Activated naive CD4-positive, alpha-beta T cell treated with anti-CD3 and anti-CD28 coated beads for 36 hours (primary cell): ENCODE measurements at regions of chr3 and their contacts with region 1.

Region 1: GRCh38 chr3:177597311-177598096 is 400.2 kb upstream of the TBL1XR1 start:
- DNase-seq: peak; percentile 51
- H3K4me3 Mint-ChIP-seq: peak overlapping the region; percentile 54
- H3K27ac Mint-ChIP-seq: peak overlapping the region; percentile 91
- H3K4me1 Mint-ChIP-seq: peaks cover 66% of the 10 kb centered on the region
- H3K27me3 Mint-ChIP-seq: no peaks in the 10 kb centered on the region

Region 2: GRCh38 chr3:177547711-177548350 is 49.7 kb before region 1 on chr3:
- CTCF ChIA-PET with region 1: no interaction called
- intact Hi-C with region 1: loop called (anchors 2 kb)
- DNase-seq: no peak
- H3K4me3 Mint-ChIP-seq: no peak overlapping the region
- H3K27ac Mint-ChIP-seq: peak overlapping the region; percentile 11
- H3K4me1 Mint-ChIP-seq: peaks cover 50% of the 10 kb centered on the region
- H3K27me3 Mint-ChIP-seq: no peaks in the 10 kb centered on the region

Region 3: GRCh38 chr3:177646749-177647148 is 49.2 kb after region 1 on chr3:
- CTCF ChIA-PET with region 1: no interaction called
- intact Hi-C with region 1: loop called (anchors 5 kb)
- DNase-seq: peak; percentile 48
- H3K4me3 Mint-ChIP-seq: no peak overlapping the region
- H3K27ac Mint-ChIP-seq: no peak overlapping the region
- H3K4me1 Mint-ChIP-seq: peaks cover 46% of the 10 kb centered on the region
- H3K27me3 Mint-ChIP-seq: no peaks in the 10 kb centered on the region

Region 4: GRCh38 chr3:177982034-177982433 is 384.5 kb after region 1 on chr3:
- CTCF ChIA-PET with region 1: no interaction called
- intact Hi-C with region 1: no loop called
- DNase-seq: no peak
- H3K4me3 Mint-ChIP-seq: no peak overlapping the region
- H3K27ac Mint-ChIP-seq: no peak overlapping the region
- H3K4me1 Mint-ChIP-seq: peaks cover 9% of the 10 kb centered on the region
- H3K27me3 Mint-ChIP-seq: no peaks in the 10 kb centered on the region